B cell (primary cell): ENCODE measurements at regions of chr2 and their contacts with region 1.

Region 1: DNA sequence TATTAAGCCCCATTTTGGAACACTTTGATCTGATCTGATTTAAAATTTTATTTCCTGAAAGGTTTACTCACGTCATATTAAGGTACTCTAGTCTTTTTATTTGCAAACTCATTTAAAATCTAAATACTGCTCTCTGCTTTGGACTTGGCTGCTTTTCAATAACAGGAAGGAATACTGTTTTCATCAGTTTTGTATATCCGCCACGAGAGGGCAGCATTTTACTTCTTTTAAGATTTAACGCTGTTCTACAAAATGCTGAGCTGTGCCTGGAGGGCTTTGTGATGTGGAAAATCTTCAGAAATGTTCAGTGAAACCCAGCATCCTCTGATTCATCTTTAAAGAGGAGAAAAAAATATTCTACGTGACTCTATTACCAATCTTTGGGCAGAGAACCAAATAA is 37.5 kb upstream of the SLC38A11 start:
- DNase-seq: peak; percentile 80
- ATAC-seq: peak; percentile 44
- H3K4me3 ChIP-seq: no peak overlapping the region
- H3K4me3 Mint-ChIP-seq: peak overlapping the region; percentile 64
- H3K27ac ChIP-seq: peak overlapping the region in 1 of 2 donors; percentile 69
- H3K27ac Mint-ChIP-seq: peak overlapping the region; percentile 83
- H3K4me1 ChIP-seq: peaks cover 33 to 38% of the 10 kb centered on the region in 2 donors
- H3K4me1 Mint-ChIP-seq: peaks cover 47% of the 10 kb centered on the region
- H3K27me3 ChIP-seq: no peaks in the 10 kb centered on the region
- H3K27me3 Mint-ChIP-seq: no peaks in the 10 kb centered on the region
- CTCF ChIP-seq: peak; percentile 78

Region 2: DNA sequence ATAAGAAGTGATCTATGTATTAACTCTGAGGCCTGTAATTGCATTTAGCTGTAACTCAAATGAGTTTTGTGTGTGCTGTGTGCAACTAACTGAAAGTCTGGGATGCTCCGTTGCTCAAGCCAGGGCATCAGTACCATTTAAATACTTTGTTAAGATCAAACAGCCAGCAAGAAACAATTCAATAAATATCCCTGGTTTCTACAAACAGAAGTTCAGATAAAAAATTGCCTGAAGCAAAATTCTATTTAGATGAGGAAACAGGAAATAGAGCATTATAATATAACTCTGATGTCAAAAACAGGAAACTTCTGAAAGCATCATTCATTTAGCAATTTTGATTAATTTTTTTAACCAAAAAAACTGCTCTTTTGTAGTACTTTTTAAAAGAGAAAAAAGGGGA is 18.6 kb before region 1 on chr2:
- CTCF ChIA-PET with region 1: interaction called, 14 read pairs
- POLR2A ChIA-PET with region 1: no interaction called
- intact Hi-C with region 1: no loop called
- DNase-seq: no peak
- ATAC-seq: no peak
- H3K4me3 ChIP-seq: no peak overlapping the region
- H3K4me3 Mint-ChIP-seq: peak overlapping the region; percentile 33
- H3K27ac ChIP-seq: peak overlapping the region; percentile 21 to 79
- H3K27ac Mint-ChIP-seq: peak overlapping the region; percentile 46
- H3K4me1 ChIP-seq: peaks cover 73 to 84% of the 10 kb centered on the region in 2 donors
- H3K4me1 Mint-ChIP-seq: peaks cover 80% of the 10 kb centered on the region
- H3K27me3 ChIP-seq: no peaks in the 10 kb centered on the region
- H3K27me3 Mint-ChIP-seq: no peaks in the 10 kb centered on the region
- CTCF ChIP-seq: no peak

Region 3: DNA sequence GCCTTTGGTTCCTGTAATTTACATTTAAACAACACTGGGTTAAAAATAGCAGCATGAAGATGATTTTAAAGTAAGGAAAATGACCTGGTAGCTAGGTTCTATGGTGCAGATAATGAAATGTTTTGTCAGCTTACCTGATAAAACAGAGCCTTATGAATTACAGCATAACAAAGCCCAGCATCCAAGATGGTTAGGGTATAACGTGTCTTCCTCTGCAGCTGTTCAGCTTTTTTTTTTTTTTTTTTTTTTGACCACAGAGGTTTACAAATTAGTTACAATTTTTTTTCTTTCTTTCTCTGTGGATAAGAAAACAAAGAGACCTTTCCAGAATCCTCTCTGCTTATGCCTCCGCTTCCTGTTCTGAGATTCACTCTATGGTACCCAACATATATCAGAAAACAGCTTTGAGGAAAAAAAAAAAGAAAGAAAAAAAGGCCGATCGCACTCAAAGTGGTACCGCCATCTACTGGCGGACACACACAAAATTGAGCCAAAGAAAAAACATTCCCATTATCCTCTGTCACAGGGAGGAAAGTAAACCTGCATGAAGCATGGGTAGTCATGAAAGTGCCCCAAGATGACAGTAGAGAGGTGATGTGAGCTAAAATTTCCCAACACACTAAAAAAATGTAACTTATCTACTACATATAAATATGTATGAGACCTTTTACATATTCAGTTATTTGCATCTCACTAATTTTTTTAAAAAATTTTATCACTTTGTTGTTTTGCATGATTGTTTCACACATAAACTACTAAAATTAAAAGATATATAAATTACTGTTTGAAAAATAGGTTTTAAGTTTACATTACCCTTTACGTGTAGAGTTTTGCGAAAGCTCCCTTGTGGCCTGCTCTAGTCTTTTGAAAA is 211.1 kb after region 1 on chr2 and contains the start of gene SCN3A:
- CTCF ChIA-PET with region 1: interaction called, 77 read pairs
- POLR2A ChIA-PET with region 1: no interaction called
- intact Hi-C with region 1: loop called (anchors 2 kb)
- DNase-seq: peak; percentile 73
- ATAC-seq: peak; percentile 62
- H3K4me3 ChIP-seq: peak within 1 kb of the TSS; percentile 23 to 71 (median 48)
- H3K4me3 Mint-ChIP-seq: peak within 1 kb of the TSS; percentile 68
- H3K27ac ChIP-seq: peak within 1 kb of the TSS in 1 of 2 donors; percentile 53
- H3K27ac Mint-ChIP-seq: peak within 1 kb of the TSS; percentile 12
- H3K4me1 ChIP-seq: peaks cover 9 to 28% of the 10 kb centered on the region in 2 donors
- H3K4me1 Mint-ChIP-seq: peaks cover 27% of the 10 kb centered on the region
- H3K27me3 ChIP-seq: no peaks in the 10 kb centered on the region
- H3K27me3 Mint-ChIP-seq: peaks cover 3% of the 10 kb centered on the region
- CTCF ChIP-seq: peak; percentile 83
- total RNA-seq, gene SCN3A: 6.0 and 6.1 TPM in 2 replicates

Region 4: GRCh38 chr2:165401285-165401852 is 408.6 kb after region 1 on chr2:
- CTCF ChIA-PET with region 1: interaction called, 3 read pairs
- POLR2A ChIA-PET with region 1: no interaction called
- intact Hi-C with region 1: loop called (anchors 2 kb)
- DNase-seq: peak; percentile 75
- ATAC-seq: no peak
- H3K4me3 ChIP-seq: no peak overlapping the region
- H3K4me3 Mint-ChIP-seq: no peak overlapping the region
- H3K27ac ChIP-seq: no peak overlapping the region
- H3K27ac Mint-ChIP-seq: no peak overlapping the region
- H3K4me1 ChIP-seq: no peaks in the 10 kb centered on the region
- H3K4me1 Mint-ChIP-seq: no peaks in the 10 kb centered on the region
- H3K27me3 ChIP-seq: no peaks in the 10 kb centered on the region
- H3K27me3 Mint-ChIP-seq: peaks cover 3% of the 10 kb centered on the region
- CTCF ChIP-seq: peak; percentile 83

Region 5: DNA sequence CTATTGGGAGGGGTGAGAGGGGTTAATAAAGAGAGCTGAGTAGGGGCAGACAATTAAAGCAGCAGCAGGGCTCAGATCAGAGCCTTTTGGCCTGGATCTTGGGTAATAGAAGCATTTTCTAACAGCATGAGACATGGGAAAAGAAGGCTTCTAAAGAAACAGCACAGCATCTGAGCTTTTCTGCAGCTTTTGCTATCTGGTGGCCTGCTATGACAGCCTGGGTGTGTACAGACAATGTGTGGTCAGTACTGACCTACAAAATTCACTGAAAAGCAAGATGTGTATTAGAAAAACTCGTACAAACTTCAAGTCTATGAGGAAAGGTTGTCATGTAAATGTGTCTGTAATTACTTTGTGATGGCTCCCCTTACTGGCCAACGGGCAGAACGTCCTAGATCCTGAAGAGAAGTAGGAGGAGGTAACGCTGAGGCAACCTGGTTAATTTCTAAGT is 705.7 kb after region 1 on chr2:
- CTCF ChIA-PET with region 1: interaction called, 3 read pairs
- POLR2A ChIA-PET with region 1: no interaction called
- intact Hi-C with region 1: loop called (anchors 10 kb)
- DNase-seq: peak; percentile 57
- ATAC-seq: peak; percentile 57
- H3K4me3 ChIP-seq: no peak overlapping the region
- H3K4me3 Mint-ChIP-seq: no peak overlapping the region
- H3K27ac ChIP-seq: no peak overlapping the region
- H3K27ac Mint-ChIP-seq: no peak overlapping the region
- H3K4me1 ChIP-seq: no peaks in the 10 kb centered on the region
- H3K4me1 Mint-ChIP-seq: peaks cover 5% of the 10 kb centered on the region
- H3K27me3 ChIP-seq: no peaks in the 10 kb centered on the region
- H3K27me3 Mint-ChIP-seq: no peaks in the 10 kb centered on the region
- CTCF ChIP-seq: peak; percentile 54

Region 6: DNA sequence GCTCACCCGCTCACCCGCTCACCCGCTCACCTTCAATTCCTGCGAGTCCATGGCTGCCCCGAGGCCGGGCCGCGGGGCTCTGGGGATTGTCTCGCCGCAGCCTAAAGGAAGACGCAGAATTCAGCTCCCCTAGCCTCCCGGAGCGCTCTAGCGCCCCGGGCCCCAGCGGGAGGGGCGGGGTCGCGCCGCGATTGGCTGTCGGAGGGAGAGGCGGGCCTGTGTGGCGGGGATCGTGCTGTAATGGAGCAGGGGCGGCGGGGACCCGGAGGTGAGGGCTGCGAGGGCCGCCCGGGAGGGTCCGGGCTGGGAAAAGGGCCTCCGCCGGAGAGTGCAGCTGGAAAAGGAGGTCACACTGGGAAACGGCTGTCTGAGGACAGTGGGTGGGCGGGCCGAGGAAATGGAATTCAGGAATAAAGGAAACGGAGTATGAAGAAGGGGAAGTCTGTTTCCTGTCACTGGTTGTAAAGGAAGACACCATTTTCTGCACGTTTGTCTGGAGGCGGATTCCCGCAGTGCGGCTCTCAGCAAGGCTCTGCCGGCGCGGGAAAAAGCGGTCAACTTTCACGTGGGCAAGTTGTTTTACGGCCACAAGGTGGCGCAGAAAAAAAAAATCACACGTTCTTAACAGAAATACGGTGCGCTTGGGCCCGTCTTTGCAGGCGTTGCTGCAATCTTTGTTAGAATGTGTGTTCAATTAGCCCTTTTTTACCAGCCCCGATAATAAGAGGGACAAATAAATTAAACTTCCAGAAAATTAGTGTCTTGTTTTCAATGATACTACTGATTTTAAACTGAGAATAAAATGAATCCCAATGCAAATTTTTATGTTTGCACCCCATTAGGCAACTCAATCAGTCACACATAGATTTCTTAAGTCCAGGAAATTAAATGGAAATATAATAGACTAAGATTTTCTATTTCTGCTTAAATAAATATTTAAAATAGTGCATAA is 961.1 kb after region 1 on chr2 and contains the start of gene TTC21B:
- CTCF ChIA-PET with region 1: interaction called, 7 read pairs
- POLR2A ChIA-PET with region 1: no interaction called
- intact Hi-C with region 1: loop called (anchors 10 kb)
- DNase-seq: peak; percentile 93
- ATAC-seq: peak; percentile 96
- H3K4me3 ChIP-seq: peak within 1 kb of the TSS; percentile 62 to 82 (median 71)
- H3K4me3 Mint-ChIP-seq: peak within 1 kb of the TSS; percentile 53
- H3K27ac ChIP-seq: peak within 1 kb of the TSS; percentile 77
- H3K27ac Mint-ChIP-seq: no peak within 1 kb of the TSS
- H3K4me1 ChIP-seq: peaks cover 19 to 23% of the 10 kb centered on the region in 2 donors
- H3K4me1 Mint-ChIP-seq: peaks cover 12% of the 10 kb centered on the region
- H3K27me3 ChIP-seq: no peaks in the 10 kb centered on the region
- H3K27me3 Mint-ChIP-seq: no peaks in the 10 kb centered on the region
- CTCF ChIP-seq: peak; percentile 90
- total RNA-seq, gene TTC21B: 41.5 and 50.7 TPM in 2 replicates